ENCODE measurements at regions of chr9 and their contacts with region 1.

Region 1: DNA sequence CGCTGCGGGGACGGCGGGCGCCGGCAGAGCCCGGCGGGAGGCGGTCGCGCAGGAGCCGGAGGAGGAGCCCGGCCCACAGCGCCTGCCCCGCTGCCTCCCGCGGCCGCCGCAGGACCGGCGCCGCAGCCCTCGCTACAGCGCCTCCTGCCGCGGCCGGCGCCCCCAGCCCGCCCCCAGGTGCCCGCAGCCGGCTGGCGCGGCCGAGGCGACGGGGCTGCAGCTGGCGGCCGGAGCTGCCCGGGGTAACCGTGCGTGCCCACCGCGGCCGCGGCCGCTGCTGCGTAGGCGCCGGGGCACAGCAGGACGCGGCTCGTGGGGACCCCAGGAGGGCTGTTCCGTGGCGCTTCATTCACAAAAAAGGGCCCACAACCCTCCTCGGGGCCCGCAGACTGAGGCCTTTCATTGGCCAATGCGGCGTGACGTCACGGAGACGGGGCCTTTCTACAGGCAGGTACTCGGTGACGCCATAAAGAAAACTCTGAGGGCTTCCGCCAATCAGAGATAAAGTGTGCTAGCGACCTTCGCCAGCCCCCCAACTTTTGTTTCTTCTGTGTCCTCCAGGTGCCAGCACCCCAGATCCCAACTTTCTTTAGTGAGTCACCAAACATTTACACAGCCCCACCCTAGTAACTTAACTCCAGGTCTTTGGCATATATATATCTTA is at the start of gene CDC14B:
- DNase-seq: peak; percentile 94
- ATAC-seq: peak; percentile 79
- total RNA-seq, gene CDC14B: 15.1 TPM

Region 2: GRCh38 chr9:96566498-96567207 is 53.0 kb before region 1 on chr9:
- intact Hi-C with region 1: loop called (anchors 10 kb)
- DNase-seq: peak; percentile 88
- ATAC-seq: peak; percentile 96

Region 3: DNA sequence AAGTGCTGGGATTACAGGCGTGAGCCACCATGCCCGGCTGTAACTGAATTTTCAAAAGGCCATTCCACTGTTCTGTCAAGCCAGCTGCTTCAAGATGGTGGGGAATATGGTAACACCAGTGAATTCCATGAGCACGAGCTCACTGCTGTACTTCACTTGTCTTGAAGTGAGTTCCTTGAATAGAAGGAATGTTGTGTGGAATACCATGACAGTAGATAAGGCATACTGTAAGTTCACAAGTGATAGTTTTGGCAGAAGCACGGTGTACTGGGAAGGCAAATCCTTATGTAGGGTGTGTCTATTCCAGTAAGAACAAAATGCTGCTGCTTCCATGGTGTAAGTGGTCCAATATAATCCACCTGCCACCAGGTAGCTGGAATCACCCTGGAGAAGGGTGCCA is 42.1 kb after region 1 on chr9:
- intact Hi-C with region 1: no loop called
- DNase-seq: no peak
- ATAC-seq: no peak

Measured in Right ventricle myocardium superior (tissue), 1 donor.